Tibial artery (tissue), 4 donors: ENCODE measurements at regions of chr20 and their contacts with region 1.

Region 1: GRCh38 chr20:32521780-32522525 is 63.2 kb downstream of the NOL4L start:
- DNase-seq: peak in 1 of 2 donors; percentile 48
- H3K4me3 ChIP-seq: no peak overlapping the region
- H3K27ac ChIP-seq: no peak overlapping the region
- H3K4me1 ChIP-seq: peaks cover 0 to 36% (median 11%) of the 10 kb centered on the region in 4 donors
- H3K27me3 ChIP-seq: peaks cover 0 to 4% of the 10 kb centered on the region in 2 donors
- CTCF ChIP-seq: peak; percentile 74 to 75

Region 2: DNA sequence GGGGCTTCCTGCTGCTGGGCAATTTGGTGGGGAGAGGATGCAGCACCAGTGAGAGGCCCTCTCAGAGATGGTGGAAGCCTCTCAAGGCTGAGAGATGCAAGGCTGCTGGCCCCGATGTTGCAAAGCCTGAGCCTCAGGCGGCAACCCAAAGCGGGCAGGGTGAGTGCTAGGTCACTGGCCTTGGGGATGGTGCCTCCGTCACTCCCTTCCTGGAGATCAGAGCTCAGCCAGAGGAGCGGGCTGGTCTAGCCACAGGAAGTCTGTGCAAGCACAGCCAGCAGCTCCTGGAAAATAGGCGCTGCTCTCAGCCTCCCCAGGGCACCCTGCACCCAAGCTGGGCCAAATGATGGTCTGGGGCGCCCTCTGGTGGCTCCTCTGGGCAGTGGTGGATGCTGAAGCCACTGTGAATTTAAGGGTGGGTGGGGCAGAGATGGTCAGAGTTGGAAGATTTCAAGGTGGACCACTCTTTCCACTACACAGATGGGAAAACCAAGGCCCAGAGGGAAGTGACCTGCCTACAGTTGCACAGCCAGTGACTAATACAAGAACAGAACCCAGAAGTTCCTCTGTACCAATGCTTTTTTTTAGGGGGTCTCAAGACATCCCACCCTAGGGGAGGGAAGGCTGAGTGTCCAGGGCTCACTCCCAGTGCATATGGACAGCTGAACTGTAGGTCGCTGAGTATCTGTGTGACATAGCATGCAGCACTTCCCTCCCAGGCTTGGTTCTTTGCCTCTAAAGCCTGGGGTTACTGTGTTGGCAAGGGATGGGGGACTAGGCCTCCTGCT is 131.0 kb after region 1 on chr20:
- intact Hi-C with region 1: loop called (anchors 2 kb)
- DNase-seq: peak; percentile 73 to 81
- H3K4me3 ChIP-seq: no peak overlapping the region
- H3K27ac ChIP-seq: no peak overlapping the region
- H3K4me1 ChIP-seq: peaks cover 0 to 4% (median 1%) of the 10 kb centered on the region in 4 donors
- H3K27me3 ChIP-seq: peaks cover 0 to 7% of the 10 kb centered on the region in 2 donors
- CTCF ChIP-seq: peak; percentile 83 to 95